CD4-positive, alpha-beta T cell (primary cell): ENCODE measurements at regions of chr1 and their contacts with region 1.

Region 1: GRCh38 chr1:44631647-44632539 is 42.4 kb downstream of the TMEM53 start:
- DNase-seq: peak; percentile 80 to 93 (median 86)
- ATAC-seq: peak; percentile 75
- H3K4me3 ChIP-seq: peak overlapping the region; percentile 71
- H3K4me3 Mint-ChIP-seq: peak overlapping the region; percentile 92
- H3K27ac ChIP-seq: peak overlapping the region; percentile 73 to 88
- H3K27ac Mint-ChIP-seq: peak overlapping the region; percentile 98
- H3K4me1 ChIP-seq: peaks cover 27% of the 10 kb centered on the region
- H3K4me1 Mint-ChIP-seq: peaks cover 48% of the 10 kb centered on the region
- H3K27me3 ChIP-seq: no peaks in the 10 kb centered on the region
- H3K27me3 Mint-ChIP-seq: no peaks in the 10 kb centered on the region
- CTCF ChIP-seq: no peak

Region 2: DNA sequence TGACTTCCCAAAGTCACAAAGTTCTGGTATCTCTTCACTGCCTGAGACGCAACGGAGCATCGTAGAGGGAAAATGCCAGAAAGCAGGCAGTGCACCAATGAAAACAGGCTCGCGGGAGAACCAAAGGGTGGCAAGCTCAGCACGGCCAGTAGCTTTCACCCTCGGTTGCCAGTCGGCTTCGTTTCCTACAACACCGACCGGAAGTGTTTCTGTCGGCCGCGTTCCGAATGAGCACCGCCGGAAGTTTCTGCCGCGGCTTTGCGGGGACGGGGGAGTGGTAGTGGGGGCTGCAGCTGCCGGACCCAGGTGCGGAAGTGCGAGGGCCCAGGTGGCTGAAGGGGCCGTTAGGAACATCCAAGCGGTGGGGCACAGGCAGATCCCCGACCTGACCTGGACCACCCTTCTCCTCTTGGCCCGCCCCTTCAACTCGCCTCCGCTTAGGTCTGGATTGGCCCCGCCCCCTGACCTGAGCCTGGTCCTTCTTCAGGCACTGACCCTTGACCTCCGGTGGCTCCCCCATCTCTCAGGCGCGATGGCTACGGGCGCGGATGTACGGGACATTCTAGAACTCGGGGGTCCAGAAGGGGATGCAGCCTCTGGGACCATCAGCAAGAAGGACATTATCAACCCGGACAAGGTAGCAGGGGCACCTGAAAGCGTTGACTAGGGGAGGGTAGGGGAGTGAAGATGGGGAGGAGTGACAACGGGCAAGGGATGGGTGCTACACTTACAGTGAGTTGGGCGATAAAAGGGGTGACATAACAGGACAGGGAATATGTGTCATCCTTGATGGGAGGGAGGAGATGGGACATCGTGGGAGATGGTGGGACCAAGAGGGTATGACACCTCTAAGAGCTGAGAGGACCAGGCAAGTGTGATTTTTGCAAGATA is 418.4 kb before region 1 on chr1 and contains the start of gene DMAP1:
- CTCF ChIA-PET with region 1: no interaction called
- POLR2A ChIA-PET with region 1: interaction called, 11 read pairs
- intact Hi-C with region 1: loop called in 1 of 2 experiments (anchors 5 kb)
- DNase-seq: peak; percentile 77 to 92 (median 82)
- ATAC-seq: peak; percentile 89
- H3K4me3 ChIP-seq: peak within 1 kb of the TSS; percentile 92
- H3K4me3 Mint-ChIP-seq: peak within 1 kb of the TSS; percentile 98
- H3K27ac ChIP-seq: peak within 1 kb of the TSS; percentile 64 to 75
- H3K27ac Mint-ChIP-seq: peak within 1 kb of the TSS; percentile 93
- H3K4me1 ChIP-seq: peaks cover 29% of the 10 kb centered on the region
- H3K4me1 Mint-ChIP-seq: peaks cover 47% of the 10 kb centered on the region
- H3K27me3 ChIP-seq: no peaks in the 10 kb centered on the region
- H3K27me3 Mint-ChIP-seq: no peaks in the 10 kb centered on the region
- CTCF ChIP-seq: no peak
- total RNA-seq, gene DMAP1: 53.4 to 56.9 TPM

Region 3: GRCh38 chr1:44645476-44646244 is 13.8 kb after region 1 on chr1:
- CTCF ChIA-PET with region 1: no interaction called
- POLR2A ChIA-PET with region 1: interaction called, 27 read pairs
- intact Hi-C with region 1: no loop called
- DNase-seq: no peak
- ATAC-seq: no peak
- H3K4me3 ChIP-seq: no peak overlapping the region
- H3K4me3 Mint-ChIP-seq: no peak overlapping the region
- H3K27ac ChIP-seq: no peak overlapping the region
- H3K27ac Mint-ChIP-seq: no peak overlapping the region
- H3K4me1 ChIP-seq: no peaks in the 10 kb centered on the region
- H3K4me1 Mint-ChIP-seq: no peaks in the 10 kb centered on the region
- H3K27me3 ChIP-seq: no peaks in the 10 kb centered on the region
- H3K27me3 Mint-ChIP-seq: no peaks in the 10 kb centered on the region
- CTCF ChIP-seq: no peak

Region 4: DNA sequence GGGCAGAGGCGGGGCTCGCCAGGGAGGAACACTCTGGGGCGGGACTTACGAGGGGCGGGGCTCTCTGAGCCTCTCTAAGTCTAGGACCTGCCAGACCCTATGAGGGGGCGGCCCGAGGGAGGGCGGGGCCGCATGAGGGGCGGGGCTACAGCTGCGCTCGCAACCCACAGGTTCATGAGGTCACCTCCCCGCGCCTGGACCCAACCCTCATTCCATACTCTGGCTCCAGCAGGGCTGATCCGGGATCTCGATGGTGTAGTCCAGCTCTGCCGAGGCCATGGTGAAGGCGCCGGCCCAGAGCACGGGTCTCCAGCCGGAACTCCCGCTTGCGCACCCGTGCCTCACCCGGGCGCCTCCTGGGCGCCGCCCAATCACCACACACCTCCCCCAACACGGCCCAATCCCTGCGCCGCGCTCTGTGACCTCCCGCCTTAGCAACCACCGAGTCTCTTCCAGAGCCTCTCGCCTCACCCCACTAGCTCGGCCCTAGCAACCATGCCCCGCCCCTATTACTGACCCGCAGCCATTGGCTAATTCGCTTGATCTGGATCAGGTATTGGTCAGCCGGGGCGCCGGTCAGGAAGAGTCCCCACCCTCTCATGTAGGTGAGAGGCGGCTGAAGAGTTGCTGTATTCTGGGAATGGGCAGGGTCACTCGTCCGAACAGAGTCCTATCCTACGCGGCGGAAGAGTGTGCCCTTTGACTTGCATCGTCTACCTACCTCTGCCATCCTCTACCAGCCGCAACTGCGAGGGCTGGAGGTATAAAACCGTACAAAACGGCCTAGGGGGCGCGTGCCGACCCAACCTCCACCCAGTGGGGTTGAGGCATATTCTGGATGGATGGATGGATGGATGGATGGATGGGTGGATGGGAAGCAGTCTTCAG is 42.5 kb after region 1 on chr1 and contains the starts of genes ARMH1 and TMEM53:
- CTCF ChIA-PET with region 1: no interaction called
- POLR2A ChIA-PET with region 1: interaction called, 28 read pairs
- intact Hi-C with region 1: loop called in 1 of 2 experiments (anchors 1 kb)
- DNase-seq: peak; percentile 91 to 99 (median 96)
- ATAC-seq: peak; percentile 90
- H3K4me3 ChIP-seq: peak within 1 kb of the TSS; percentile 86
- H3K4me3 Mint-ChIP-seq: peak within 1 kb of the TSS; percentile 93
- H3K27ac ChIP-seq: peak within 1 kb of the TSS; percentile 75 to 86
- H3K27ac Mint-ChIP-seq: peak within 1 kb of the TSS; percentile 84
- H3K4me1 ChIP-seq: peaks cover 31% of the 10 kb centered on the region
- H3K4me1 Mint-ChIP-seq: peaks cover 29% of the 10 kb centered on the region
- H3K27me3 ChIP-seq: no peaks in the 10 kb centered on the region
- H3K27me3 Mint-ChIP-seq: no peaks in the 10 kb centered on the region
- CTCF ChIP-seq: no peak
- total RNA-seq, gene ARMH1: 79.9 to 84.0 TPM
- total RNA-seq, gene TMEM53: 0.64 to 1.2 TPM

Region 5: GRCh38 chr1:44739361-44740178 is 107.7 kb after region 1 on chr1 and contains the start of gene KIF2C:
- CTCF ChIA-PET with region 1: no interaction called
- POLR2A ChIA-PET with region 1: no interaction called
- intact Hi-C with region 1: loop called in 1 of 2 experiments (anchors 5 kb)
- DNase-seq: peak; percentile 94 to 98 (median 96)
- ATAC-seq: peak; percentile 100
- H3K4me3 ChIP-seq: peak within 1 kb of the TSS; percentile 66
- H3K4me3 Mint-ChIP-seq: peak within 1 kb of the TSS; percentile 98
- H3K27ac ChIP-seq: peak within 1 kb of the TSS; percentile 63 to 85
- H3K27ac Mint-ChIP-seq: peak within 1 kb of the TSS; percentile 97
- H3K4me1 ChIP-seq: peaks cover 8% of the 10 kb centered on the region
- H3K4me1 Mint-ChIP-seq: peaks cover 18% of the 10 kb centered on the region
- H3K27me3 ChIP-seq: no peaks in the 10 kb centered on the region
- H3K27me3 Mint-ChIP-seq: no peaks in the 10 kb centered on the region
- CTCF ChIP-seq: no peak
- total RNA-seq, gene KIF2C: 0.64 to 0.82 TPM